GM12878 (cell line): ENCODE measurements at regions of chr19 and their contacts with region 1.

Region 1: GRCh38 chr19:40798223-40798996 is 581 bp upstream of the EGLN2 start:
- DNase-seq: peak; percentile 97
- ATAC-seq: peak; percentile 91
- H3K4me3 ChIP-seq: peak overlapping the region; percentile 66
- H3K27ac ChIP-seq: peak overlapping the region; percentile 68
- H3K4me1 ChIP-seq: peaks cover 38% of the 10 kb centered on the region
- H3K27me3 ChIP-seq: no peaks in the 10 kb centered on the region
- CTCF ChIP-seq: peak; percentile 46 to 53 (median 48); a peak in 5 of 6 replicates
- EP300 ChIP-seq: 0 out of 4 replicates have a peak, but pooled peaks of 1 of the 2 experiments have one; percentile 31
- POLR2A ChIP-seq: peak; percentile 67
- RAD21 ChIP-seq: peak; percentile 42; the same call in 1 of the 2 replicates

Region 2: GRCh38 chr19:40716655-40717324 is 81.6 kb before region 1 on chr19 and contains the starts of genes COQ8B and ITPKC:
- CTCF ChIA-PET with region 1: interaction called, 7 read pairs
- POLR2A ChIA-PET with region 1: interaction called, 5 read pairs
- RAD21 ChIA-PET with region 1: interaction called, 4 read pairs
- SMC1A ChIA-PET with region 1: interaction called, 5 read pairs
- in situ Hi-C with region 1: no loop called
- intact Hi-C with region 1: loop called (anchors 2 kb)
- DNase-seq: peak; percentile 88
- ATAC-seq: peak; percentile 72
- H3K4me3 ChIP-seq: peak within 1 kb of the TSS; percentile 79
- H3K27ac ChIP-seq: peak within 1 kb of the TSS; percentile 94
- H3K4me1 ChIP-seq: peaks cover 18% of the 10 kb centered on the region
- H3K27me3 ChIP-seq: no peaks in the 10 kb centered on the region
- CTCF ChIP-seq: no peak
- EP300 ChIP-seq: peak in 1 of 2 experiments; percentile 64; a peak in 2 of 4 replicates
- POLR2A ChIP-seq: peak; percentile 73
- RAD21 ChIP-seq: no peak
- polyA plus RNA-seq, gene COQ8B: 0.39 to 0.57 TPM
- polyA plus RNA-seq, gene ITPKC: 0.03 to 0.26 TPM

Region 3: GRCh38 chr19:40889366-40889765 is 91.0 kb after region 1 on chr19:
- CTCF ChIA-PET with region 1: no interaction called
- POLR2A ChIA-PET with region 1: no interaction called
- RAD21 ChIA-PET with region 1: no interaction called
- SMC1A ChIA-PET with region 1: no interaction called
- in situ Hi-C with region 1: no loop called
- intact Hi-C with region 1: no loop called
- DNase-seq: no peak
- ATAC-seq: no peak
- H3K4me3 ChIP-seq: no peak overlapping the region
- H3K27ac ChIP-seq: no peak overlapping the region
- H3K4me1 ChIP-seq: no peaks in the 10 kb centered on the region
- H3K27me3 ChIP-seq: peaks cover 0 to 2% of the 10 kb centered on the region in 2 experiments; a peak in 2 of 4 replicates
- CTCF ChIP-seq: no peak
- EP300 ChIP-seq: no peak
- POLR2A ChIP-seq: no peak
- RAD21 ChIP-seq: no peak